Sigmoid colon (tissue), 7 donors: ENCODE measurements at regions of chr16 and their contacts with region 1.

Region 1: GRCh38 chr16:50548125-50548908 is at the start of gene NKD1:
- DNase-seq: peak; percentile 86
- H3K4me3 ChIP-seq: peak within 1 kb of the TSS; percentile 55 to 97 (median 78)
- H3K27ac ChIP-seq: peak within 1 kb of the TSS; percentile 74 to 87 (median 82)
- H3K4me1 ChIP-seq: peaks cover 0 to 30% (median 23%) of the 10 kb centered on the region in 4 donors
- H3K27me3 ChIP-seq: no peaks in the 10 kb centered on the region
- CTCF ChIP-seq: no peak
- EP300 ChIP-seq: no peak
- POLR2A ChIP-seq: no peak
- total RNA-seq, gene NKD1: 6.7 to 18.0 (median 11.5) TPM

Region 2: DNA sequence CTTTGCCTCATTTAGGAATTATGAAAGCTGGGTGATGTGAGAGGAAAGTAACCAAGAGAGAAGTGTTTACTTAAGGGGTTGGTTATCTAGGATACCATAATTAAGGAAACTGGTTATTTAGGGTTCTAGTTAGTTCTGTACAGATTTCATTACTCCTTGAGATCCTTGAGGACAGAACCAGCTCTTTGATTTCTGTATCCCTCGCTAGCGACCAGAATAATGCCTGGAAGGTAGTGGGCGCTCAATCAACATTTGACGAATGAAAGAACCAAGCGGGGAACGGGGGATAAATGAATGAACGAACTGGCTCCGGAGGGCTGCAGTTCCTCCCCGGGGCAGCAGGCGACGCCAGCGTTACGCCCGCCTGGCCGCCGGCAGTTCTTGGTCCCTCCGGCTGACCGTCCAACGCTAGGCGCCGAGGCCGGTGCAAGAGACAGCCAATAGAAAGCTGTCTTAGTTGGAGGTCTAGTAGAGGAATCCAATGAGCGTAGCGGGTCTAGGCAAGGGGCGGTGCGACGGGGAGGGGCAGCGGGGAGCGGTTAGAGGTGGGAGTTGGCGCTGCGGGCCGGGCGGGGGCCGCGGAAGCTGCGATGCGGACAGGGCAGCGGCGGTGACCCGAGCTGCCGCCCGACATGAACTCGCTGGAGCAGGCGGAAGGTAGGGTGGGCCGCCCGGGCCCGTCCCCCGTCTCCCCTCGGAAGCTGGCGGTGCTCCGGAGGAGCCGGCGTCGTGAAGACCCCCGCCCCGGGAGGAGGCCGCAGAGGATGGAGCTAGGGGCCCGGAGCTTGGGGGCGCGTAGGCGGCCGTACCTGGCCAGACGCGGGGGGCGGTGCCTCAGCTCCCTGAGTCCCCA is 523.4 kb before region 1 on chr16 and contains the start of gene CNEP1R1:
- intact Hi-C with region 1: loop called (anchors 10 kb)
- DNase-seq: peak; percentile 98
- H3K4me3 ChIP-seq: peak within 1 kb of the TSS; percentile 89 to 100 (median 100)
- H3K27ac ChIP-seq: peak within 1 kb of the TSS; percentile 84 to 91 (median 88)
- H3K4me1 ChIP-seq: peaks cover 0 to 35% (median 21%) of the 10 kb centered on the region in 4 donors
- H3K27me3 ChIP-seq: no peaks in the 10 kb centered on the region
- CTCF ChIP-seq: peak; percentile 99 to 100 (median 100)
- EP300 ChIP-seq: peak in 1 of 4 donors; percentile 44
- POLR2A ChIP-seq: peak; percentile 38 to 53
- total RNA-seq, gene CNEP1R1: 10.2 to 18.9 (median 14.1) TPM

Region 3: GRCh38 chr16:50425648-50426047 is 122.7 kb before region 1 on chr16:
- intact Hi-C with region 1: no loop called
- DNase-seq: no peak
- H3K4me3 ChIP-seq: no peak overlapping the region
- H3K27ac ChIP-seq: no peak overlapping the region
- H3K4me1 ChIP-seq: no peaks in the 10 kb centered on the region
- H3K27me3 ChIP-seq: no peaks in the 10 kb centered on the region
- CTCF ChIP-seq: no peak
- EP300 ChIP-seq: no peak
- POLR2A ChIP-seq: no peak

Region 4: GRCh38 chr16:50593410-50594150 is 45.3 kb after region 1 on chr16:
- intact Hi-C with region 1: loop called (anchors 5 kb)
- DNase-seq: no peak
- H3K4me3 ChIP-seq: no peak overlapping the region
- H3K27ac ChIP-seq: peak overlapping the region; percentile 76 to 86 (median 82)
- H3K4me1 ChIP-seq: peaks cover 0 to 54% (median 46%) of the 10 kb centered on the region in 4 donors
- H3K27me3 ChIP-seq: no peaks in the 10 kb centered on the region
- CTCF ChIP-seq: peak in 1 of 4 experiments; percentile 21
- EP300 ChIP-seq: no peak
- POLR2A ChIP-seq: no peak

Region 5: GRCh38 chr16:50616883-50617645 is 68.7 kb after region 1 on chr16:
- intact Hi-C with region 1: loop called (anchors 2 kb)
- DNase-seq: peak; percentile 88
- H3K4me3 ChIP-seq: no peak overlapping the region
- H3K27ac ChIP-seq: peak overlapping the region; percentile 81 to 94 (median 90)
- H3K4me1 ChIP-seq: peaks cover 0 to 75% (median 72%) of the 10 kb centered on the region in 4 donors
- H3K27me3 ChIP-seq: no peaks in the 10 kb centered on the region
- CTCF ChIP-seq: no peak
- EP300 ChIP-seq: peak in 1 of 4 donors; percentile 39
- POLR2A ChIP-seq: no peak

Region 6: GRCh38 chr16:50627419-50627818 is 79.1 kb after region 1 on chr16:
- intact Hi-C with region 1: loop called (anchors 1 kb)
- DNase-seq: peak; percentile 91
- H3K4me3 ChIP-seq: no peak overlapping the region
- H3K27ac ChIP-seq: peak overlapping the region; percentile 46 to 64 (median 60)
- H3K4me1 ChIP-seq: peaks cover 0 to 32% (median 26%) of the 10 kb centered on the region in 4 donors
- H3K27me3 ChIP-seq: no peaks in the 10 kb centered on the region
- CTCF ChIP-seq: peak; percentile 54 to 81 (median 66)
- EP300 ChIP-seq: no peak
- POLR2A ChIP-seq: no peak

Region 7: GRCh38 chr16:50665128-50665878 is 117.0 kb after region 1 on chr16:
- intact Hi-C with region 1: loop called (anchors 10 kb)
- DNase-seq: peak; percentile 86
- H3K4me3 ChIP-seq: peak overlapping the region; percentile 38 to 54 (median 52)
- H3K27ac ChIP-seq: peak overlapping the region; percentile 68 to 76 (median 73)
- H3K4me1 ChIP-seq: peaks cover 0 to 13% (median 7%) of the 10 kb centered on the region in 4 donors
- H3K27me3 ChIP-seq: no peaks in the 10 kb centered on the region
- CTCF ChIP-seq: peak; percentile 79 to 82 (median 80)
- EP300 ChIP-seq: no peak
- POLR2A ChIP-seq: no peak

Region 8: DNA sequence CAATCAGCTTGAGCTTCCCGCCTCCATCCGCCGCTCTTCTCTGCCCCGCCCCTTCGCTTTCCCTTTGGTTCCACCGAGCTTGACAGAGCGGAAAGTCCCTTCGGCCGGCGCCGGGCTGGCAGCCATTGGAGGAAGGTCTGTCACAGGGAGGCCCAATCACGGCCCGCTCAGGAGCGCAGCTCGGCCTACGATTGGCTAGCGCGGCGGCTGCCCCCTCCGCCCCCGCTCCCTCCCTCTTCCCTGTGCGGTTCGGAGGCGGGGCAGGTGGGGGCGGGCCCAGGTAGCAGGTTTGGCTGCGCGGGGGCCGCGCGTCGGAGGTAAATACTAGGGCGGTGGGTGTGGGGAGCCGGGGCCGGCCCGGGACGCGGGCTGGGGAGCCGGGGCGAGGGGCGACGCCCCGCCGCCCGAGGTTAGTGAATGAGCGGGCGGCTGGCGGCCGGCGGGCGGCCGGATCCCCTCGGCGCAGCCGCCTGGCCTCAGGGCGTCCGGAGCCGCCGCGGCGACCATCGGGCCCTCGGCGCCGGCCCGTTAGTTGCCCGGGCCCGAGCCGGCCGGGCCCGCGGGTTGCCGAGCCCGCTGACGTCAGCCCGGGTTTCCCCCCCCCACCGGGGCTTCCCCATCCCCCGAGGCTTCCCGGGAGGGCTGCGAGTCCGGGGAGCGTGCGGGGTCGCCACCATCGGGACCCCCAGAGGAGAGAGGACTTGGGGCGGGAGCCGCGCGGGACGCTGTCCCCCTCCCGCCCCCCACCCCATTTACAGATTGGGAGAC is 193.7 kb after region 1 on chr16 and contains the start of gene CYLD:
- intact Hi-C with region 1: loop called (anchors 2 kb)
- DNase-seq: peak; percentile 100
- H3K4me3 ChIP-seq: peak within 1 kb of the TSS; percentile 68 to 99 (median 95)
- H3K27ac ChIP-seq: peak within 1 kb of the TSS; percentile 88 to 95 (median 92)
- H3K4me1 ChIP-seq: peaks cover 0 to 42% (median 32%) of the 10 kb centered on the region in 4 donors
- H3K27me3 ChIP-seq: no peaks in the 10 kb centered on the region
- CTCF ChIP-seq: no peak
- EP300 ChIP-seq: no peak
- POLR2A ChIP-seq: peak in 1 of 2 donors; percentile 29
- total RNA-seq, gene CYLD: 29.6 to 45.3 (median 38.5) TPM

Region 9: DNA sequence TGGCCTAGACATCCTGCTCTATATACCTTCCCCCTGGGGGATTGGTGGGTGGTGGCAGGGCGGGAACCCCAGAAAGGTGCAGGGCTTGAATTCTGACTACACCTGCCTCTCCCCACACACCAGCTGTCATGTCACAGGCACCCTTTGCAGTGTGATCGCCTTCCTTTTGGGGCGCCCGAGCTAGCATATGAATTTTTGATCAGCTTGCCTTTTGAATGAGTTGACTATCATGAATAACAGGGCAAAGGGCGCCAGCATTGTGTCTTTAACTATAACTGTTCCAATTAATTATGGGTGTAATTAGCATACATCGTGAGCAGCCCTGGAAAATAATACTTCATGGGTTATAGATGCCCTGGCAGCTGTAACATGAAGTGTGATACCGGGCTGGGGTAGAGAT is 266.2 kb after region 1 on chr16:
- intact Hi-C with region 1: no loop called
- DNase-seq: no peak
- H3K4me3 ChIP-seq: no peak overlapping the region
- H3K27ac ChIP-seq: no peak overlapping the region
- H3K4me1 ChIP-seq: no peaks in the 10 kb centered on the region
- H3K27me3 ChIP-seq: no peaks in the 10 kb centered on the region
- CTCF ChIP-seq: no peak
- EP300 ChIP-seq: no peak
- POLR2A ChIP-seq: no peak